GM12878 (cell line): ENCODE measurements at regions of chr10 and their contacts with region 1.

Region 1: GRCh38 chr10:26437637-26438461 is at the start of gene APBB1IP:
- DNase-seq: peak; percentile 61
- ATAC-seq: peak; percentile 77
- H3K4me3 ChIP-seq: peak within 1 kb of the TSS; percentile 89
- H3K27ac ChIP-seq: peak within 1 kb of the TSS; percentile 95
- H3K4me1 ChIP-seq: peaks cover 15% of the 10 kb centered on the region; the same call in 1 of the 2 replicates
- H3K27me3 ChIP-seq: no peaks in the 10 kb centered on the region
- CTCF ChIP-seq: peak in 2 of 3 experiments; percentile 4 to 6; a peak in 1 of 6 replicates
- EP300 ChIP-seq: peak in 1 of 2 experiments; percentile 6; a peak in 1 of 4 replicates
- POLR2A ChIP-seq: peak; percentile 64
- RAD21 ChIP-seq: peak; percentile 20
- polyA plus RNA-seq, gene APBB1IP: 7.3 to 11.4 TPM

Region 2: GRCh38 chr10:24920907-24921881 is 1516.7 kb before region 1 on chr10:
- CTCF ChIA-PET with region 1: no interaction called
- POLR2A ChIA-PET with region 1: no interaction called
- RAD21 ChIA-PET with region 1: no interaction called
- SMC1A ChIA-PET with region 1: no interaction called
- in situ Hi-C with region 1: loop called (anchors 25 kb)
- intact Hi-C with region 1: no loop called
- DNase-seq: peak; percentile 67
- ATAC-seq: peak; percentile 95
- H3K4me3 ChIP-seq: no peak overlapping the region
- H3K27ac ChIP-seq: peak overlapping the region; percentile 69
- H3K4me1 ChIP-seq: peaks cover 9% of the 10 kb centered on the region
- H3K27me3 ChIP-seq: no peaks in the 10 kb centered on the region
- CTCF ChIP-seq: no peak
- EP300 ChIP-seq: peak; percentile 86 to 91
- POLR2A ChIP-seq: no peak
- RAD21 ChIP-seq: peak; percentile 12; the same call in 1 of the 2 replicates

Region 3: GRCh38 chr10:26205223-26205622 is 232.6 kb before region 1 on chr10:
- CTCF ChIA-PET with region 1: no interaction called
- POLR2A ChIA-PET with region 1: no interaction called
- RAD21 ChIA-PET with region 1: no interaction called
- SMC1A ChIA-PET with region 1: no interaction called
- in situ Hi-C with region 1: no loop called
- intact Hi-C with region 1: no loop called
- DNase-seq: no peak
- ATAC-seq: no peak
- H3K4me3 ChIP-seq: no peak overlapping the region
- H3K27ac ChIP-seq: no peak overlapping the region
- H3K4me1 ChIP-seq: no peaks in the 10 kb centered on the region
- H3K27me3 ChIP-seq: no peaks in the 10 kb centered on the region
- CTCF ChIP-seq: no peak
- EP300 ChIP-seq: no peak
- POLR2A ChIP-seq: no peak
- RAD21 ChIP-seq: no peak

Region 4: DNA sequence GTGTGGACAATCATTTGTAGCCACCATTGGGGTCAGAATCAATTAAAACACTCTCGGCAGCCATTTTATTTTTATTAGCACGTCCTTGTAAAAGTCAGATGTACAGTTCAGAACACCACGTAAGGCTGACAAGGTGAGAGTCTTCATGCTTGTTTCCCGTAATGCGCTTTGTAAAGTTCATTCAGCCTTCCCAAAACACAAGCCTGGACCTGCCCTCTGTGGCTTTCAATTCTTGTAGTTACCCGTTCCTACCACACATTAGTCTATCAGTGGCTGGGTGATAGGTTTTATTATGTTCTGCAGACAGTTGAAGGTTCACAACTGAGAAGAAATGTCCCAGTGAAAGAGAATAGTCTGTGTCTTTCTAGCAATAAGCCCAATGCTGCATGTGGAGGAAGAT is 185.9 kb before region 1 on chr10:
- CTCF ChIA-PET with region 1: no interaction called
- POLR2A ChIA-PET with region 1: no interaction called
- RAD21 ChIA-PET with region 1: no interaction called
- SMC1A ChIA-PET with region 1: no interaction called
- in situ Hi-C with region 1: no loop called
- intact Hi-C with region 1: no loop called
- DNase-seq: no peak
- ATAC-seq: no peak
- H3K4me3 ChIP-seq: no peak overlapping the region
- H3K27ac ChIP-seq: no peak overlapping the region
- H3K4me1 ChIP-seq: no peaks in the 10 kb centered on the region
- H3K27me3 ChIP-seq: no peaks in the 10 kb centered on the region
- CTCF ChIP-seq: no peak
- EP300 ChIP-seq: no peak
- POLR2A ChIP-seq: no peak
- RAD21 ChIP-seq: no peak

Region 5: GRCh38 chr10:26314265-26315013 is 123.4 kb before region 1 on chr10:
- CTCF ChIA-PET with region 1: no interaction called
- POLR2A ChIA-PET with region 1: no interaction called
- RAD21 ChIA-PET with region 1: no interaction called
- SMC1A ChIA-PET with region 1: no interaction called
- in situ Hi-C with region 1: no loop called
- intact Hi-C with region 1: no loop called
- DNase-seq: no peak
- ATAC-seq: no peak
- H3K4me3 ChIP-seq: no peak overlapping the region
- H3K27ac ChIP-seq: no peak overlapping the region
- H3K4me1 ChIP-seq: no peaks in the 10 kb centered on the region
- H3K27me3 ChIP-seq: peaks cover 0 to 9% of the 10 kb centered on the region in 2 experiments; a peak in 3 of 4 replicates
- CTCF ChIP-seq: no peak
- EP300 ChIP-seq: no peak
- POLR2A ChIP-seq: no peak
- RAD21 ChIP-seq: no peak

Region 6: GRCh38 chr10:26457088-26457487 is 19.2 kb after region 1 on chr10:
- CTCF ChIA-PET with region 1: interaction called, 5 read pairs
- POLR2A ChIA-PET with region 1: interaction called, 8 read pairs
- RAD21 ChIA-PET with region 1: interaction called, 17 read pairs
- SMC1A ChIA-PET with region 1: interaction called, 21 read pairs
- in situ Hi-C with region 1: no loop called
- intact Hi-C with region 1: no loop called
- DNase-seq: peak; percentile 85
- ATAC-seq: peak; percentile 92
- H3K4me3 ChIP-seq: peak overlapping the region; percentile 16; the same call in 1 of the 2 replicates
- H3K27ac ChIP-seq: peak overlapping the region; percentile 83
- H3K4me1 ChIP-seq: peaks cover 43% of the 10 kb centered on the region
- H3K27me3 ChIP-seq: no peaks in the 10 kb centered on the region
- CTCF ChIP-seq: no peak
- EP300 ChIP-seq: peak; percentile 36 to 40; a peak in 2 of 4 replicates
- POLR2A ChIP-seq: no peak; the same call in 1 of the 2 replicates
- RAD21 ChIP-seq: no peak

Region 7: GRCh38 chr10:26468700-26469099 is 30.9 kb after region 1 on chr10:
- CTCF ChIA-PET with region 1: interaction called, 3 read pairs
- POLR2A ChIA-PET with region 1: interaction called, 6 read pairs
- RAD21 ChIA-PET with region 1: interaction called, 18 read pairs
- SMC1A ChIA-PET with region 1: interaction called, 12 read pairs
- in situ Hi-C with region 1: no loop called
- intact Hi-C with region 1: no loop called
- DNase-seq: no peak
- ATAC-seq: peak; percentile 72
- H3K4me3 ChIP-seq: peak overlapping the region; percentile 61
- H3K27ac ChIP-seq: peak overlapping the region; percentile 67
- H3K4me1 ChIP-seq: peaks cover 75% of the 10 kb centered on the region
- H3K27me3 ChIP-seq: no peaks in the 10 kb centered on the region
- CTCF ChIP-seq: no peak
- EP300 ChIP-seq: no peak
- POLR2A ChIP-seq: 0 out of 2 replicates have a peak, but pooled peaks have one; percentile 24
- RAD21 ChIP-seq: no peak

Region 8: GRCh38 chr10:26890956-26891355 is 453.1 kb after region 1 on chr10:
- CTCF ChIA-PET with region 1: no interaction called
- POLR2A ChIA-PET with region 1: no interaction called
- RAD21 ChIA-PET with region 1: no interaction called
- SMC1A ChIA-PET with region 1: no interaction called
- in situ Hi-C with region 1: no loop called
- intact Hi-C with region 1: no loop called
- DNase-seq: no peak
- ATAC-seq: peak; percentile 83
- H3K4me3 ChIP-seq: no peak overlapping the region
- H3K27ac ChIP-seq: no peak overlapping the region
- H3K4me1 ChIP-seq: no peaks in the 10 kb centered on the region
- H3K27me3 ChIP-seq: no peaks in the 10 kb centered on the region; a peak in 1 of 4 replicates
- CTCF ChIP-seq: peak; percentile 55 to 71 (median 68)
- EP300 ChIP-seq: no peak
- POLR2A ChIP-seq: no peak
- RAD21 ChIP-seq: peak; percentile 87